ENCODE measurements at regions of chr11 and their contacts with region 1.

Region 1: DNA sequence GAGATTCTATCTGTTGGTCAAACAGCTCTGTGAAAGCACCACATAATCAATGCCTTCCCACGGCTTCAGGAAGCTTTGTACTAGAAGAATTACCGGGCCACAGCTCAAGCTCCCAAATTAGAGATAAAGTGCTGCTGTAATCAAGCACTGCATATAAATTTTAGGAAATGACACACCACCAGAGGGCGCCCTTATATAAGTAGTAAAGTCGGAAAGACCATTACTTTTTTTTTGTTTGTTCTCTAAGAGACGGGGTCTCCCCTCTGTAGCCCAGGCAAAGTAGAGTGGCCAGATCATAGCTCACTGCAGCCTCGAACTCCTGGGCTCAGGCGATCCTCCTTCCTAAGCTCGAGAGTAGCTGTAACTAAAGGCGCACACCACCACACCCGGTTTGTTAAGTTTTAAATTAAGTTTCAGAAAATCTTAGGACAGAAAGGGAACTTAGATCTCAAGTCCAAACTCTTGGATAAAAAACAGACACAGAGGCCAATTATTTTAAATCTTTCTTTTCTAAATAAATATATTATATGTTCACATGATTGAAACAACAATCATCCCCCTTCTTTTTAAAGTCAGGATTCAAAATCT is 32.6 kb downstream of the PRCP start:
- DNase-seq: peak in 1 of 2 donors; percentile 89
- H3K4me3 ChIP-seq: peak overlapping the region in 1 of 2 donors; percentile 25
- H3K27ac ChIP-seq: no peak overlapping the region
- H3K4me1 ChIP-seq: peaks cover 0 to 2% of the 10 kb centered on the region in 2 donors
- H3K27me3 ChIP-seq: no peaks in the 10 kb centered on the region
- CTCF ChIP-seq: peak; percentile 51 to 73 (median 65)

Region 2: GRCh38 chr11:82718307-82718706 is 149.3 kb before region 1 on chr11:
- intact Hi-C with region 1: loop called (anchors 1 kb)
- DNase-seq: no peak
- H3K4me3 ChIP-seq: no peak overlapping the region
- H3K27ac ChIP-seq: peak overlapping the region in 1 of 2 donors; percentile 5
- H3K4me1 ChIP-seq: peaks cover 0 to 21% of the 10 kb centered on the region in 2 donors
- H3K27me3 ChIP-seq: no peaks in the 10 kb centered on the region
- CTCF ChIP-seq: peak; percentile 60 to 82 (median 62)

Region 3: GRCh38 chr11:82927254-82927880 is 59.8 kb after region 1 on chr11:
- intact Hi-C with region 1: loop called (anchors 1 kb)
- DNase-seq: no peak
- H3K4me3 ChIP-seq: no peak overlapping the region
- H3K27ac ChIP-seq: no peak overlapping the region
- H3K4me1 ChIP-seq: no peaks in the 10 kb centered on the region
- H3K27me3 ChIP-seq: no peaks in the 10 kb centered on the region
- CTCF ChIP-seq: peak in 2 of 3 experiments; percentile 66 to 69

Measured in ascending aorta (tissue), 2 donors.